ENCODE measurements at regions of chr10 and their contacts with region 1.

Region 1: GRCh38 chr10:80504158-80504811 is 33.4 kb upstream of the SH2D4B start:
- DNase-seq: no peak
- ATAC-seq: peak; percentile 24
- H3K4me3 ChIP-seq: peak overlapping the region in 1 of 3 experiments; percentile 7; a peak in 1 of 6 replicates
- H3K27ac ChIP-seq: peak overlapping the region; percentile 58
- H3K4me1 ChIP-seq: peaks cover 84% of the 10 kb centered on the region
- H3K27me3 ChIP-seq: no peaks in the 10 kb centered on the region
- CTCF ChIP-seq: no peak
- EP300 ChIP-seq: no peak
- POLR2A ChIP-seq: no peak
- RAD21 ChIP-seq: no peak

Region 2: DNA sequence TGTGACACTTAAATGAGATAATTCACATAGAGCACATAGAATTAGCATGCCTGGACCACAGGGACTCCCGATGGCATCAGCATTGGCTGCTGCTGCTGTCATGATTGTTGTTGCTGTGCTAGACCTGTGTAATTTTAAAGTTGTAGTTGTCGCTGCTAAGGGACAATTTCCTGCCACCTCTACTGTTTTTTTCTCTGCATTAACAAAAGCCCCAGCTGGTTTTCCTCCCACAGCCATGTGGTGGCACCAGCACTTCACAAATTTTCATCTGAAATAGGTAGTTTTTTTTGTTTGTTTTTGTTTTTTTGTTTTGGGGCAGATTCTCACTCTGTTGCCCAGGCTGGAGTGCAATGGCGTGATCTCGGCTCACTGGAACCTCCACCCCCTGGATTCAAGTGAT is 121.3 kb before region 1 on chr10:
- CTCF ChIA-PET with region 1: interaction called, 9 read pairs
- POLR2A ChIA-PET with region 1: no interaction called
- in situ Hi-C with region 1: loop called (anchors 5 kb)
- intact Hi-C with region 1: loop called (anchors 2 kb)
- DNase-seq: peak; percentile 40
- ATAC-seq: peak; percentile 52; the same call in 2 of the 3 replicates
- H3K4me3 ChIP-seq: no peak overlapping the region
- H3K27ac ChIP-seq: no peak overlapping the region
- H3K4me1 ChIP-seq: peaks cover 10% of the 10 kb centered on the region
- H3K27me3 ChIP-seq: no peaks in the 10 kb centered on the region
- CTCF ChIP-seq: peak; percentile 77
- EP300 ChIP-seq: no peak
- POLR2A ChIP-seq: no peak
- RAD21 ChIP-seq: peak; percentile 78

Region 3: DNA sequence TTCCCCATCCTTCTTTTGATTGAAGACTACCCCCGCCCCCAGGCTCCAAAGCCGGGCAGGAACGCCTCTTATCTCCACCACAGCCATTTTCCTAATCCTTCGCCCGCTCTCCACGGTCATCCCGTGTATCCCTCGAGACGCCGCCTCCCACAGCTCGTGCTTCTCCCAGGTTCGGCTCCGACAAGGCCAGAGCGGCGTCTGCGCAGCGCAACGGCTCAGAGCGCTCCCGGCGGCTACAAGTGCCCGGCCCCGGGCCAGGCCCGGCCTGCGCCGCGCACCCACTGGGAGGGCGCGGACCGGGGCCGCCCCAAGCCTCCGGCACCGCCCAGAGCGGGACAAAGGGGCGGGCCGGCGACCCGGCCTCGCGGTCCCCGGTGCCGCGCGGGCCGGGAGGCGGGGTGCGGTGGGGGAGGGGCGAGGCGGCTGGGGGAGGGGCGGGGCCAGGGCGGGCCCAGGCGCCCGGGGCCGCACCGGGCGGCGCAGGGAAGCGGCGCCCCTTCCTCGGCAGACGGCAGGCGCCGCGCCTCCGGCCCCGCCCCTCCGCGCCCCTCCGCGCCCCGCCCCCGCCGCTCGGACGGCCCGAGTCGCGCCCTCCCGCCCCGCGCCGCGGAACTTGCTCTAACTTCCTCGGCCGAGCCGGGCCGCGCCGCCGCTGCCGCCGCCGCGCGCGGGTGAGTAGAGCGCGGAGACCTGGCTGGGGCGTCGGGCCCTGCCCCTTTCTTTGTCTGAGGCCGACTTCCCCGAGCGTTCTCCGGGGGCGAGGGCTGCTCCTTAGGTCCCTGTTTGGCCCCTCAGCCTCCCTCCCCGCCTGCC is 50.4 kb before region 1 on chr10 and contains the start of gene TSPAN14:
- CTCF ChIA-PET with region 1: no interaction called
- POLR2A ChIA-PET with region 1: interaction called, 16 read pairs
- in situ Hi-C with region 1: loop called (anchors 5 kb)
- intact Hi-C with region 1: no loop called
- DNase-seq: peak; percentile 53
- ATAC-seq: peak; percentile 87
- H3K4me3 ChIP-seq: peak within 1 kb of the TSS; percentile 89 to 99 (median 93)
- H3K27ac ChIP-seq: peak within 1 kb of the TSS; percentile 77
- H3K4me1 ChIP-seq: peaks cover 71% of the 10 kb centered on the region
- H3K27me3 ChIP-seq: no peaks in the 10 kb centered on the region; a peak in 1 of 5 replicates
- CTCF ChIP-seq: no peak
- EP300 ChIP-seq: no peak; a peak in 1 of 4 replicates
- POLR2A ChIP-seq: peak; percentile 16 to 54; a peak in 3 of 4 replicates
- RAD21 ChIP-seq: peak; percentile 45; the same call in 1 of the 2 replicates
- total RNA-seq, gene TSPAN14: 17.4 and 24.1 TPM in 2 replicates

Region 4: DNA sequence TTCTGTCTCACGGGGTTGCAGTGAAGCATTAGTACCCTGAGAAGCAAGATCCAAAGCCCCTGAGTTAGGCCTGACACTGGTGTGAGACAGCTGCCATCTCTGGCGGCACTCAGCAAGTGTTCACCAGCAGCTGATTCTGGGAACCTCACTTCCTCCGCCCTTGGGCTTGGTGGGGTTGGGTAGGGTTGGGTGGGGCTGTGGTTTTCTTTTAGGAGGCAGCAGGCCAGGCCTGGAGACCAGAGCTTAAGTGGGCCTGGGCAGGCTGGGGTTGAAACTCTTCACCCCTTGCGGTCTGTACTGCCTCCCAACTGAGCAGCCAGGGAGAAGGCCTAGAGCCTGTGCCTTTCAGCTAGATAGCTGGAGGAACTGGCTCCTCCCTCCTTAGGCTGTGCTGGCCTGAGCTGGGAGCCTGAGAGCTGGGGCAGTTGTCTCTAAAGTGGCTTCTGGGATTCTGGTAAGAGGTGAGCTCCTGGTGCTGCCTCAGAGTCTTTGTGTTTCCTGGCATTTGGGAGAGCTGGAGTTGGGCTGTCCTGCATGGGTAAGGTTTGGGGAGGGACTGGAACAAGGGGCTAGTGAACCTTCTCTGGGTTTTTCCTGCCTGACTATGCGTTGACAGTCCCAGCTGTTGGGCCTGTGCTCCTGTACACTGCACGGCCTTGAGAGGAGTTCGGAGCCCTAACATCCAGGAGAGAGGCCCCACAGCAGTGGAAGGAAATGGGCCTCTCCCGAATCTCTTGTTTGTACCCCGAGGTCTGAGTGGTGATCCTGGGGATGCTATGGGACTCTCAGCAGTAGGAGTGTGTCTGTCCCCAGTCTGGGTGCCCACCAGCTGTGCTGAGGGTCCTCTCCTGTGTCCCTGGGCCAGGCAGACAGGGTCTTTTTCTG is 45.0 kb before region 1 on chr10:
- CTCF ChIA-PET with region 1: no interaction called
- POLR2A ChIA-PET with region 1: interaction called, 25 read pairs
- in situ Hi-C with region 1: loop called (anchors 5 kb)
- intact Hi-C with region 1: loop called (anchors 2 kb)
- DNase-seq: no peak
- ATAC-seq: peak; percentile 10; the same call in 2 of the 3 replicates
- H3K4me3 ChIP-seq: peak overlapping the region in 1 of 3 experiments; percentile 24; a peak in 2 of 6 replicates
- H3K27ac ChIP-seq: peak overlapping the region; percentile 10
- H3K4me1 ChIP-seq: peaks cover 90% of the 10 kb centered on the region
- H3K27me3 ChIP-seq: no peaks in the 10 kb centered on the region; a peak in 1 of 5 replicates
- CTCF ChIP-seq: no peak
- EP300 ChIP-seq: no peak
- POLR2A ChIP-seq: no peak
- RAD21 ChIP-seq: no peak

Region 5: GRCh38 chr10:80493522-80494051 is 10.7 kb before region 1 on chr10:
- CTCF ChIA-PET with region 1: no interaction called
- POLR2A ChIA-PET with region 1: interaction called, 58 read pairs
- in situ Hi-C with region 1: no loop called
- intact Hi-C with region 1: no loop called
- DNase-seq: peak; percentile 89
- ATAC-seq: peak; percentile 28
- H3K4me3 ChIP-seq: no peak overlapping the region
- H3K27ac ChIP-seq: peak overlapping the region; percentile 48
- H3K4me1 ChIP-seq: peaks cover 100% of the 10 kb centered on the region
- H3K27me3 ChIP-seq: no peaks in the 10 kb centered on the region
- CTCF ChIP-seq: no peak
- EP300 ChIP-seq: peak in 1 of 2 experiments; percentile 35; a peak in 1 of 4 replicates
- POLR2A ChIP-seq: no peak
- RAD21 ChIP-seq: no peak

Measured in HepG2 (cell line).